ENCODE measurements at regions of chr22 and their contacts with region 1.

Region 1: DNA sequence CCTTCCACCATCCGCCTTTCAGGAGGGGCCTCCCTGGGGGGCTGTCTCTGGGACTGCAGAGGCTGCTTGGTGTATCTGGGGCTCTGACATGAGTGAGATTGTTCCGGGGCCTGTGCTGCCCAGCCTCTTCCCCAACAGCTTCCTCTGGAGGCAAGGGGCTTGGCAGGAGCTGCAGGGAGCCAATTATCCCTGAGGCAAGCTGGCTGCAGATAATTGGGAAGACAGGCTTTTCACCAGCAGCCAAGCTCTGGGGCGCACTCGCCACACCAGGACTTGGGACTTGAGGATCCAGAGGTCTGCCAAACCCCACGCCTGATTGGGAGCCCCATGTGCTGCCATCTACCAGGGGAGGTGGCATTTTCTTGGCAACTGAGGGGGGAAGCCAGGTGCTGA is 15.6 kb upstream of the RTN4R start:
- DNase-seq: no peak
- ATAC-seq: no peak
- H3K4me3 ChIP-seq: no peak overlapping the region
- H3K4me3 Mint-ChIP-seq: no peak overlapping the region
- H3K27ac ChIP-seq: no peak overlapping the region
- H3K27ac Mint-ChIP-seq: no peak overlapping the region
- H3K4me1 ChIP-seq: peaks cover 0 to 3% of the 10 kb centered on the region in 2 donors
- H3K4me1 Mint-ChIP-seq: peaks cover 4% of the 10 kb centered on the region
- H3K27me3 ChIP-seq: peaks cover 0 to 4% (median 0%) of the 10 kb centered on the region in 4 experiments
- H3K27me3 Mint-ChIP-seq: peaks cover 4% of the 10 kb centered on the region
- CTCF ChIP-seq: no peak

Region 2: GRCh38 chr22:20268279-20269012 is 15.2 kb before region 1 on chr22 and contains the start of gene RTN4R:
- CTCF ChIA-PET with region 1: interaction called, 5 read pairs
- POLR2A ChIA-PET with region 1: no interaction called
- intact Hi-C with region 1: loop called (anchors 1 kb)
- DNase-seq: peak; percentile 68
- ATAC-seq: peak; percentile 89
- H3K4me3 ChIP-seq: peak within 1 kb of the TSS in 2 of 5 experiments; percentile 25 to 33
- H3K4me3 Mint-ChIP-seq: peak within 1 kb of the TSS; percentile 75
- H3K27ac ChIP-seq: no peak within 1 kb of the TSS
- H3K27ac Mint-ChIP-seq: no peak within 1 kb of the TSS
- H3K4me1 ChIP-seq: peaks cover 8 to 14% of the 10 kb centered on the region in 2 donors
- H3K4me1 Mint-ChIP-seq: peaks cover 5% of the 10 kb centered on the region
- H3K27me3 ChIP-seq: peaks cover 0 to 9% (median 3%) of the 10 kb centered on the region in 4 experiments
- H3K27me3 Mint-ChIP-seq: peaks cover 3% of the 10 kb centered on the region
- CTCF ChIP-seq: peak; percentile 61
- total RNA-seq, gene RTN4R: 0.42 and 0.51 TPM in 2 replicates

Region 3: GRCh38 chr22:20469110-20469868 is 185.6 kb after region 1 on chr22:
- CTCF ChIA-PET with region 1: no interaction called
- POLR2A ChIA-PET with region 1: no interaction called
- intact Hi-C with region 1: no loop called
- DNase-seq: no peak
- ATAC-seq: no peak
- H3K4me3 ChIP-seq: no peak overlapping the region
- H3K4me3 Mint-ChIP-seq: no peak overlapping the region
- H3K27ac ChIP-seq: no peak overlapping the region
- H3K27ac Mint-ChIP-seq: peak overlapping the region; percentile 34
- H3K4me1 ChIP-seq: peaks cover 15% of the 10 kb centered on the region in 2 donors
- H3K4me1 Mint-ChIP-seq: peaks cover 25% of the 10 kb centered on the region
- H3K27me3 ChIP-seq: no peaks in the 10 kb centered on the region
- H3K27me3 Mint-ChIP-seq: no peaks in the 10 kb centered on the region
- CTCF ChIP-seq: no peak